K562 (cell line): ENCODE measurements at regions of chr17 and their contacts with region 1.

Region 1: DNA sequence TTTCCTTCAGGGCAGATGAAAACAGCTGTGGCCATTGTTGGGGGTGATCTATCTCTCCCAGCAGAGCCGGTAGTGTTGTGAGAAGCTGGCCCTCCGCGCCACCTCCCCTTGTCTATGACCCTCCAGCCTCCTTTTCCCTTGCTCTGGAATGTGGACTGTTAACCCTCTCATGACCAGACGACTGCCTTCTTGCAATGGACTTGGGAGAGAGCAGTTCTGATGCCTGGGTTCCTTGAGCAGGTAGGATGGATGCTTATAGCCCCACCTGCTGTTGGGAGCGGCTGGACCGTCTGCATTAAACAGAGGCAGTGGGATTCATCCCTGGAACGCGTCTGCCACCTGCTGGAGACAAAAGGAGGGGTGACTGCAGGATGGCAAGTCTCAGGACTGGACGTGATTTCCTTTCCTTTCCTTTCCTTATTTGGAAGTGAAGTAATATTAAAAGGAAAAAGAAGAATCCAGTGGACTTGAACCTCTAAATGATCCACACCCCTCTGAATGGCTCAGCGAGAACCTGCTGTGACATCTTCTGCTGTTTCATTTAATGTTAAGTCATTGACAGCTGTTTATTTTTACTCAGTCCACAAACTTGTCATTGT is 1.8 kb upstream of the SOST start:
- DNase-seq: peak; percentile 91 to 92 (median 92)
- ATAC-seq: peak; percentile 98
- H3K4me3 ChIP-seq: no peak overlapping the region
- H3K27ac ChIP-seq: no peak overlapping the region
- H3K4me1 ChIP-seq: peaks cover 0 to 8% of the 10 kb centered on the region in 2 experiments; a peak in 2 of 5 replicates
- H3K27me3 ChIP-seq: peaks cover 19 to 59% of the 10 kb centered on the region in 2 experiments
- CTCF ChIP-seq: peak; percentile 99 to 100 (median 100)
- EP300 ChIP-seq: no peak
- POLR2A ChIP-seq: no peak
- RAD21 ChIP-seq: peak; percentile 99 to 100

Region 2: GRCh38 chr17:43694077-43694870 is 66.1 kb before region 1 on chr17:
- CTCF ChIA-PET with region 1: interaction called, 310 read pairs
- POLR2A ChIA-PET with region 1: interaction called, 5 read pairs
- in situ Hi-C with region 1: loop called (anchors 5 kb)
- intact Hi-C with region 1: loop called (anchors 1 kb)
- DNase-seq: peak; percentile 69 to 81 (median 77)
- ATAC-seq: peak; percentile 99
- H3K4me3 ChIP-seq: no peak overlapping the region
- H3K27ac ChIP-seq: no peak overlapping the region
- H3K4me1 ChIP-seq: no peaks in the 10 kb centered on the region
- H3K27me3 ChIP-seq: peaks cover 0 to 42% of the 10 kb centered on the region in 2 experiments; a peak in 2 of 5 replicates
- CTCF ChIP-seq: peak; percentile 90 to 97 (median 97)
- EP300 ChIP-seq: no peak
- POLR2A ChIP-seq: no peak
- RAD21 ChIP-seq: peak; percentile 93 to 97